Activated CD4-positive, alpha-beta T cell treated with anti-CD3 and anti-CD28 coated beads for 36 hours (primary cell): ENCODE measurements at regions of chr1 and their contacts with region 1.

Region 1: GRCh38 chr1:23657659-23658275 is 33.8 kb upstream of the RPL11 start:
- DNase-seq: peak; percentile 72
- ATAC-seq: peak; percentile 91
- H3K4me3 Mint-ChIP-seq: no peak overlapping the region
- H3K27ac Mint-ChIP-seq: no peak overlapping the region
- H3K4me1 Mint-ChIP-seq: no peaks in the 10 kb centered on the region
- H3K27me3 Mint-ChIP-seq: no peaks in the 10 kb centered on the region

Region 2: DNA sequence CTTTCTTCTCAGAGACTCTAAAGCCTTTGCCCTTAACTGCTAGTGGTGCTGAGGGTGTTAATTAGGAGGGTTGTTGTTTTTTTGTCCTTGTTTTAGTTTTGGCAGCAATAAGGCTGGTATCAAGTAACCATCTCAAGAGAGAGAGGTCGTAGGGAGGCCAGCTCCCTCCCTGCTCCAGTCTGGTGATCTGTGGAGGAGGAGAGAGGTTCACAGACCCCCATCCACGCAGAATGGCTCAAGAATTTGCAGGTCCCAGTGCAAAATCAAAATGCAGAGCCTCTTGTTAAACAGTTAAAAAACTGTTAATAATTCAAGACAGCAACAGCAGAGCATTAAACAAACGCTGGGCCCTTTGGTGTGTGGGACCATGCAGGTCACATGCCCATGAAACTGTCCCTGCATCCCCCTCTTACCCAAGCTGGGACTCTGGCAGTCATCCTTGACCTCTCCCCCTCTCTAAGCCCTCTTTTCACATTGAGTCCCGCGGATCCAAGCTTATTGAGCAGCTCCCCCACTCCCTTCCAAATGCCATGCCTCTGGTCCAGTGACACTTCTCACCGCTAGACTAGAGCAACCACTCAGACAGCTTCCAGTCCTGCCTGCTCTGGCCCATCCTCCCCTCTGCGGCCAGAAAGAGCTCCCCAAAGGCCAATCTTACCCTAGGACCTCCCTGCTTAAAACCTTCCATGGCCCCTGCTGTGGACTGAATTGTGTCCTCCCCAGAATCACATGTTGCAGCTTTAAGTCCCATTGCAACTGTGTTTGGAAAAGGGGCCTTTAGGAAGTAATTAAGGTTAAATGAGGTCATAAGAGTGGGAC is 13.8 kb before region 1 on chr1:
- CTCF ChIA-PET with region 1: interaction called, 21 read pairs
- POLR2A ChIA-PET with region 1: no interaction called
- intact Hi-C with region 1: no loop called
- DNase-seq: no peak
- ATAC-seq: no peak
- H3K4me3 Mint-ChIP-seq: no peak overlapping the region
- H3K27ac Mint-ChIP-seq: no peak overlapping the region
- H3K4me1 Mint-ChIP-seq: no peaks in the 10 kb centered on the region
- H3K27me3 Mint-ChIP-seq: no peaks in the 10 kb centered on the region